ENCODE measurements at regions of chr10 and their contacts with region 1.

Region 1: GRCh38 chr10:83612050-83612449 is 527.3 kb upstream of the GHITM start:
- DNase-seq: peak; percentile 48
- H3K4me3 ChIP-seq: no peak overlapping the region
- H3K27ac ChIP-seq: no peak overlapping the region
- H3K4me1 ChIP-seq: peaks cover 48% of the 10 kb centered on the region
- H3K27me3 ChIP-seq: no peaks in the 10 kb centered on the region
- CTCF ChIP-seq: no peak
- POLR2A ChIP-seq: no peak

Region 2: DNA sequence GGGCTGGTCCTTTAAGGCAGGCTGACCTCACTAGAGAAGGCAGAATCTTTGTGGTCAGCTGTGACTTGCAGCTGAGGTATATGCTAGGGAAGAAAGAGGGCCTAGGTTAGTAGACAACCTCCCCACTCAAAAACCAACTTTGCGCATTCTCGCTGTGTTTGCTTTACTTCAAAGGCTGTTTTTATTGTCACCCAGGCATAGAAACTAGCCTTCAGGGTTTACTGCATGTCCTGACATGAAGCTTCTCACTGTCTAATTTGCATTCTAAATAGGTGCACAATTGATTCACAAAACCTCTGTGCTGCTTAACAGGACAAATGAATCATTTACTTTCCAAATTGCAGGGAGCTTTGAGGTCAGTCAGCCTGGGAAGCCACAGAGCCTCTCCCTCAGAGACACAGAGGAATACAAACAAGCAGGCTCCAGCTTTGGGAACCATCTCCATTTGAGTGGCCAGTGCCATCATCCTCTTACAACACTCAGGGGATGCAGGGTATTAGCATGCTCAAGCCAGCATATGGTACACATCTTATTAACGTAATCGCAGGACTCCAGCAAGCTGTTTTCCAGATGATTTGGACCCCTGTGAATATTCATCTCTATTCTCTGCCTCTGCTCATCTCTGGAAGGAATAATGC is 69.2 kb before region 1 on chr10:
- CTCF ChIA-PET with region 1: interaction called, 3 read pairs
- POLR2A ChIA-PET with region 1: interaction called, 10 read pairs
- dilution Hi-C with region 1: no loop called
- intact Hi-C with region 1: loop called (anchors 5 kb)
- DNase-seq: no peak
- H3K4me3 ChIP-seq: no peak overlapping the region
- H3K27ac ChIP-seq: no peak overlapping the region
- H3K4me1 ChIP-seq: peaks cover 16% of the 10 kb centered on the region
- H3K27me3 ChIP-seq: no peaks in the 10 kb centered on the region
- CTCF ChIP-seq: no peak
- POLR2A ChIP-seq: no peak

Region 3: GRCh38 chr10:83647526-83647925 is 35.5 kb after region 1 on chr10:
- CTCF ChIA-PET with region 1: no interaction called
- POLR2A ChIA-PET with region 1: no interaction called
- dilution Hi-C with region 1: no loop called
- intact Hi-C with region 1: loop called (anchors 1 kb)
- DNase-seq: peak; percentile 52
- H3K4me3 ChIP-seq: no peak overlapping the region
- H3K27ac ChIP-seq: peak overlapping the region; percentile 55
- H3K4me1 ChIP-seq: peaks cover 45% of the 10 kb centered on the region
- H3K27me3 ChIP-seq: no peaks in the 10 kb centered on the region
- CTCF ChIP-seq: no peak
- POLR2A ChIP-seq: no peak